ENCODE measurements at regions of chr17 and their contacts with region 1.

Region 1: DNA sequence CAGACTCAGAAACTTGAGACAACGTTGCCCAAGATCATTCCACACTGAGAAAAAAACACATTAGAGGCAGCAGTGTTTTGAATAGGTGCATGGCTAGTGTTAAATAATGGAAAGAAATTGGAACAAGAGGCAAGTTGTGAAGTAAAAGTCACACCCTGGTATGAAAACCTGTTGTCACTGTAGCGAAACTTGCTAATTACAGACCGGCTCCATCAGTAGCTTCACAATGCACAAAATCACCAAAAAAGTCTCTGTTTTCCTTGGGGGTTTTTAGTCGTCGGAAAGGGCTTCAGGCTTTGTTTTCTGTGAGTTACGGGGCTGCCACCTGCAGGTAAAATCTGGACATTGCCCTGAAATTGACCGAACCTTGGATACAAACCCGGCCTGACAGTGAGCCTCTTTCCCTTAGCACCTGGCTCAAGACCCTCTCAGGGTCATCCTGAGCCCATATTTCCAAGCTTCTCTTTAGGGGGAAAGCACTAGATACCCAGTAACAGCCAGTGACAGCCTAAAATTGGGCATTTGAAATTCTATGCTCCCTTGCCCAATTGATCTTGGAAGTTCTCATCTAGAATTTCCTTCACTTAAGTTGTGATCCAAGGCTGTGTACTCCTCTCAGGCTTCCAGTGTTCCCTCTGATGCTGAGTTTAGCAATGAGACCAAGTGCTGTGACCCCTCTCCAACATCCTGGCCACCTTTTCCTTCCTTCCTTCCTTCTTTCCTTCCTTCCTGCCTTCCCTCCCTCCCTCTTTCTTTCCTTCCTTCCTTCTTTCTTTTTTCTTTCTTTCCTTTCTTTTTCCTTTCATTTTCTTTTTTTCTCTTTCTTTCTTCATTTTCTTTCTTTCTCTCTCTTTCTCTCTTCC is 7.2 kb upstream of the GRB2 start:
- DNase-seq: no peak
- H3K4me3 ChIP-seq: no peak overlapping the region
- H3K27me3 ChIP-seq: peaks cover 6% of the 10 kb centered on the region
- CTCF ChIP-seq: peak; percentile 77

Region 2: DNA sequence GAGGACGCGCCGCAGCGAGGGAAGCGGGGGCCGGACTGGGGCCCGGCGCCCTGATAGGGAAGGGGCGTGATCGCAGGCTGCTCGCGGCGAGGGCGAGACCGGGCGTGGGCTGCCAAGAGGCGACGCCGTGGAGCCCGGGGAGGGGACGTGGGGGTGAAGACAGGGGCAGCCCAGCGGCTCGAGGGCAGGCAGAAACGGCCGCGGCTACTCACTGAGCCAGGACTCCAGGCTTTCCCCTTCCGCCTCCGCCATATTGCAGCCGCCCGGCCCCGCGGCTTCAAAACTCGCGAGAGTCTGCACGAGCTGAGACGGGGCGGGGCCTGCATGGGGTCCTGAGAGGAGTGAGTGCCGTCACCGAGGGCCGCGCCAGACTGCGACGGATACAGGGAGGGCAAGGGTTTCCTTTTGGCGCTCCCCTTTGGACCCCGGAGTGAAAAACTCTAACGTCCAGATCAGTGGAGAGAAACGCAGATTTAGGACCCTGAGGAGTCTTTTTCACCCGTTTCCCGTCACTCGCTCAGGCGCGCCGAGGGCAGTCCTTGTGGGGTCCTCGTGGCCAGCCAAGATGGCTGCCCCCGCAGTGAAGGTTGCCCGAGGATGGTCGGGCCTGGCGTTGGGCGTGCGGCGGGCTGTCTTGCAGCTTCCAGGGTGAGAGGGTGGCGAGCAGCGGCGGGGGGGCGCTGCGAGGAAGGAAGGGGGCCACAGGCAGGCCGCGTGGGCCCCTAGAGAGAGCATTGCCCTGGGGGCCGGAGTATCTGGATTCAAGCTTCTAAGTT is 151.2 kb before region 1 on chr17 and contains the starts of genes GGA3 and MRPS7:
- CTCF ChIA-PET with region 1: interaction called, 11 read pairs
- POLR2A ChIA-PET with region 1: no interaction called
- DNase-seq: peak; percentile 61
- H3K4me3 ChIP-seq: peak within 1 kb of the TSS; percentile 84
- H3K27me3 ChIP-seq: no peaks in the 10 kb centered on the region
- CTCF ChIP-seq: no peak
- polyA plus RNA-seq, gene GGA3: 18.7 and 27.6 TPM in 2 replicates
- polyA plus RNA-seq, gene MRPS7: 66.3 and 69.1 TPM in 2 replicates

Region 3: GRCh38 chr17:75271233-75271954 is 141.3 kb before region 1 on chr17:
- CTCF ChIA-PET with region 1: interaction called, 13 read pairs
- POLR2A ChIA-PET with region 1: interaction called, 18 read pairs
- DNase-seq: no peak
- H3K4me3 ChIP-seq: peak overlapping the region; percentile 71
- H3K27me3 ChIP-seq: no peaks in the 10 kb centered on the region
- CTCF ChIP-seq: peak; percentile 7

Region 4: DNA sequence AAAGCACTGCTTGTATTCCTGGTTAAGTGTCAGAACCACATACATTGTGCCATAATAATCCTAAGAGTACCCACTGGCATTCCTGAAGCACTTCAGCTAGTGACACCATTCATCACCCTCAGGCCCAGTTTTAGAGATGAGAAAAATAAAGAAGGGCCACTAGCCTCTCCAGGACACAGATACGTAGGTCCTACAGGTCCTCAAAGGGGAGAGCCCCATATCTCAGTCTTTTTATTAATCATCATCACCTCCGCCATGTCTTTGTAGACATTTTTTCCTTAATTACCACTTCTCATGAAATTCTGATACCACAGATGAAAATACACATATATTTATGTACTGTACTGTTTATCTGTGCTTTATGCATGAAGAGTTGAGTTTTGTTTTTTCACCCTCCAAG is 50.7 kb before region 1 on chr17:
- CTCF ChIA-PET with region 1: no interaction called
- POLR2A ChIA-PET with region 1: no interaction called
- DNase-seq: no peak
- H3K4me3 ChIP-seq: no peak overlapping the region
- H3K27me3 ChIP-seq: no peaks in the 10 kb centered on the region
- CTCF ChIP-seq: no peak

Region 5: DNA sequence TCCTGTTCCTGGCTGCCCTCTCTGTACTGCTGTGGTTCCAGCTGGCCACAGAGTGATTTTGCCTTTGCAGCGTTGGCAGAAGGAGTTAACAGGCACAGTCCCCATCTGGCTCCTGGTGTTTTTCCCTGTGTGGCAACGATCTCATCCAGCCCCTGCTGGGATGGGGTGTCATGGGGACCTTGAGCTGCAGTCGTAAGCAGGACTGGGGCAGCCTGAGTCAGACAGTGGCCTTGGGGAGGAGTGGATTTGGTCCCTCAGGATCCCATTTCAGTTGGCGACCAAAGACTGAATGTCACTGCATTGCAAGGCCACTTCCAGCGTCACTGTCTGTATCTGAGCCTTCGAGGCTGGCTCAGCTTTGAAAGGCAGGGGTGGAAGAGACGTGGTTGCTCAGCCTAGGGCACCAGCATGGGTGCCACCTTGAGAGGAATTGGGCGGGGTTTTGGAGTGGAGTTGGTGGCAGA is 55.6 kb after region 1 on chr17:
- CTCF ChIA-PET with region 1: no interaction called
- POLR2A ChIA-PET with region 1: no interaction called
- DNase-seq: no peak
- H3K4me3 ChIP-seq: no peak overlapping the region
- H3K27me3 ChIP-seq: no peaks in the 10 kb centered on the region
- CTCF ChIP-seq: no peak